Endothelial cell of umbilical vein (primary cell): ENCODE measurements at regions of chr5 and their contacts with region 1.

Region 1: GRCh38 chr5:157471709-157472108 is 11.7 kb downstream of the NIPAL4 start:
- DNase-seq: peak; percentile 27
- H3K4me3 ChIP-seq: no peak overlapping the region
- H3K27ac ChIP-seq: no peak overlapping the region
- H3K4me1 ChIP-seq: peaks cover 6% of the 10 kb centered on the region
- H3K27me3 ChIP-seq: no peaks in the 10 kb centered on the region
- CTCF ChIP-seq: peak; percentile 48 to 57
- POLR2A ChIP-seq: no peak

Region 2: GRCh38 chr5:156444753-156445291 is 1026.9 kb before region 1 on chr5:
- CTCF ChIA-PET with region 1: no interaction called
- POLR2A ChIA-PET with region 1: no interaction called
- dilution Hi-C with region 1: no loop called
- intact Hi-C with region 1: no loop called
- DNase-seq: no peak
- H3K4me3 ChIP-seq: no peak overlapping the region
- H3K27ac ChIP-seq: no peak overlapping the region
- H3K4me1 ChIP-seq: no peaks in the 10 kb centered on the region
- H3K27me3 ChIP-seq: no peaks in the 10 kb centered on the region
- CTCF ChIP-seq: no peak
- POLR2A ChIP-seq: no peak

Region 3: GRCh38 chr5:156865427-156865826 is 606.3 kb before region 1 on chr5:
- CTCF ChIA-PET with region 1: no interaction called
- POLR2A ChIA-PET with region 1: no interaction called
- dilution Hi-C with region 1: no loop called
- intact Hi-C with region 1: no loop called
- DNase-seq: no peak
- H3K4me3 ChIP-seq: no peak overlapping the region
- H3K27ac ChIP-seq: no peak overlapping the region
- H3K4me1 ChIP-seq: no peaks in the 10 kb centered on the region
- H3K27me3 ChIP-seq: no peaks in the 10 kb centered on the region
- CTCF ChIP-seq: no peak
- POLR2A ChIP-seq: no peak

Region 4: DNA sequence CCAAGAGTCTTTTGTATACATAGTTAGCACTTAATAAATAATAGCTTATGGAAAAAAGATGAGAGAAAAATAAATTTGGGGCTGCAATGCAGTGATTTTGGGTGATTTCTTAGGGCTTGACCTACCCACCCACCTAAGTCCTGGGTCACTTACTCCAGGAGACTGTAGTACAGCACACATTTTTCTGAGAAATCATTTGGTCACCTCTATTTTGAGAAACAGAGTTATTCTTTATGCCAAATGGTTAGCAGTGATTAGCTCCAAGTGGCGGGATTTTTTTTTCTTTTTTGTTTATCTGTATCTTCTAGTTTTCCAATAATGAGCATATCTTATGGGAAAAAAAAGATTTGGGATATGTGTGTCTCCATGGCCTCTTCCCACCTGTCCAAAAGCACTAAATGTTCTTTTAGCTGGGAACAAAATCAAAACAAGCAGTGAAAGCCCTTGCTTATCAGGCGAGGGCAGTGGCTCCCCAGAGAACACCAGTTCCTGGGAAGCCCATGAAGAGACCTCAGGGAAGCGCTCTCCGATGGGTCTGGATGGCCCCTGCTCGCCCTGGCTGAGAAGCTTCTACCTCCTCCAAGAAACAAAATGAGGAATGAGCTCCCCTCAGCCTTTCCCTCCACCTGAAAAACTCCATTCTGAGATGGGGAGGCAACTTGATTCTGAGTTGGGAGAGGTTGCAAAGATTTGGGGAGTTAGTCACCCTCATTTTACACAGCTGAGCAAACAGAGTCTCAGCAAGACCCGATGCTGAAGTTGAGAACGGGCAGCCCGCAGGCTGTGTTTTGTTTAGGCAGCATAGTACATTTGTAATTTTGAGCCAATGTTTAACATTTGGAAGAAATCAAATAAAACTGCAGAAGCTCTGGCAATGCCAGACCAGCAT is 135.9 kb before region 1 on chr5:
- CTCF ChIA-PET with region 1: interaction called, 52 read pairs
- POLR2A ChIA-PET with region 1: no interaction called
- dilution Hi-C with region 1: loop called (anchors 25 kb)
- intact Hi-C with region 1: no loop called
- DNase-seq: no peak
- H3K4me3 ChIP-seq: no peak overlapping the region
- H3K27ac ChIP-seq: no peak overlapping the region
- H3K4me1 ChIP-seq: no peaks in the 10 kb centered on the region
- H3K27me3 ChIP-seq: peaks cover 0 to 2% of the 10 kb centered on the region in 2 experiments
- CTCF ChIP-seq: no peak
- POLR2A ChIP-seq: no peak

Region 5: DNA sequence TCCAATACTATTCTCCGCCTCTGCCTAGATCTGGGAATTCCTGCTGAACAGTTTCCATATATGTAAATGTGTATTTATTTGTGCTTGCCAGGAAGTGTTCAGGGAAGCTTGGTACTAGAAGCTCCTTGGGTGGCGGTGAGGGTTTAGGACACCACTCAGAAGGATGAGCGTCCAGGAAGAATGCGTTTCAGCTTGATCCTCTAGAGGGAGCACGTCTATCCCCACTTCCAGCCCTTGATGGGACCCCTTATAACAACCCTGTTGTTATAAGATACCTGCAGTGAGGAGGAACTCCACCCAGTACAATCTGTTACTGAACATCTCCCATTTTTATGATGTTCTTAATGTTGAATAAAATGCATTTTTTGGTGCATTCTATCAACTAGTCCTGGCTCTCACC is 116.9 kb before region 1 on chr5:
- CTCF ChIA-PET with region 1: interaction called, 17 read pairs
- POLR2A ChIA-PET with region 1: no interaction called
- dilution Hi-C with region 1: loop called (anchors 25 kb)
- intact Hi-C with region 1: no loop called
- DNase-seq: no peak
- H3K4me3 ChIP-seq: no peak overlapping the region
- H3K27ac ChIP-seq: no peak overlapping the region
- H3K4me1 ChIP-seq: peaks cover 13% of the 10 kb centered on the region
- H3K27me3 ChIP-seq: no peaks in the 10 kb centered on the region
- CTCF ChIP-seq: peak; percentile 17 to 31
- POLR2A ChIP-seq: no peak

Region 6: DNA sequence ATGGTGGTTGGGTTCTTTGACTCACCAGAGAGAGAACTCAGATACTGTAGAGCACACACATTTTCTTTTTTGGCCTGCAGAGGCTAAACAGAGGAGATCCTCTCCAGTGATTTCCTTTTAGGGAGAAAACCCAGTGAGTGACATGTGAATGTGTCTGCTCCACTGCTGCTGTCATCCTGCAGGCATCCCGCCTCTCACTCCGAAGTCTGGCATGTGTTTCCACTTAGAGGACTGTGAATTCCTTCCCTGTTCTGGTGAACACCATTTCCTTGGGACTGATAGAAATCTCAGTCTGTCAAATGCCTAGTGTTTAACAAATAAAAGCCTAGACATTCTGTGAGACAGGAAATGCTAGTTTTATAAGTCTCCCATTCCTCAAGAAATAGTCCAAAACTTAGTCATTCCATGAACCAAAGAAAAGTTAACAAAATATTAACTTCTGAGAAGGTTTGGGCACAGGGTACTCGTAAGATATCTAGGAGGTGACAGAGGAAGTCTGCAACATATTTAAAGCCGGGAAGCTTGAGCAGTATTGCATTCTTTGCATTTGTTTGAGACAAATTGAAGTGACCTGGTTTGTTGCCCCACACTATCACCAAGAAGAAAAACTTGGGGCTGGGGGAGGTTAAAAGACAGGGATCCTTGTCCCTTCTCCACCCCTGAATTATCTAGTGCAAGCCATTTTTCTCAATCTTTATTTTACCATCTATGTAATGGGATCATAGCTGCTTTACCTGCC is 86.6 kb before region 1 on chr5:
- CTCF ChIA-PET with region 1: interaction called, 13 read pairs
- POLR2A ChIA-PET with region 1: no interaction called
- dilution Hi-C with region 1: no loop called
- intact Hi-C with region 1: no loop called
- DNase-seq: peak; percentile 91
- H3K4me3 ChIP-seq: no peak overlapping the region
- H3K27ac ChIP-seq: peak overlapping the region; percentile 88
- H3K4me1 ChIP-seq: peaks cover 57% of the 10 kb centered on the region
- H3K27me3 ChIP-seq: no peaks in the 10 kb centered on the region
- CTCF ChIP-seq: no peak
- POLR2A ChIP-seq: no peak

Region 7: DNA sequence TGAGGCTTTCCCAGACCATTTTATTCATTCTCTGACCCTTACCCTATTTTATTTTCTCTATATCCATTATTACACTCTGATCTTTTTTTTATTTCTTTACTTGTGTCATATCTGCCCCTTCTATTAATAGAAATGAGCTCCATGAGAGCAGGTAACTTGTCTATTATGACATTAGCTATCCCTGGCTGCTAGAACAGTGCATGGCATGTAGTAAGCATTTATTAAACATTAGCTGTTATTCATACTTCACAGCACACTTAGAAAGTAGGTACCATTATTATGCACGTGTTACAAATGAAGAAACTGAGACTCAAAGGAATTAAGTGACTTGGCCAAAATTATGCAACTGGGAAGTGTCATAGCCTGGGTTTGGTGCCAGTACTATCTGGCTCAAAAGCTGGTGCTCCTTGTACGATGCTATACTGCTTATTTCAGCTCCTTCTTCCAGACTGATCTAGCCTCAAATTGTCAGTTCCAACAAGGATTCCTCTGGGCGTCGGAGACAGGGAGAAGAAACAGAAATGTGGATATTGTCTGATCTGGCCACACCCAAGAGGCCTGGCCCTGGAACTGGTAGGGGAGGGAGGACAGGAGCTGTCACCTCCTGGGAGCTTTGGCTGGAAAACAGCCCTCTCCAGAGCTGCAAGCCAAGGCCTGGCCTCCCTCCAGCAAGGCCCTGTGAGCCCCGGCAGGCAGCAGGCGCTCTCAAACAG is 22.5 kb before region 1 on chr5:
- CTCF ChIA-PET with region 1: interaction called, 10 read pairs
- POLR2A ChIA-PET with region 1: no interaction called
- dilution Hi-C with region 1: no loop called
- intact Hi-C with region 1: no loop called
- DNase-seq: no peak
- H3K4me3 ChIP-seq: no peak overlapping the region
- H3K27ac ChIP-seq: no peak overlapping the region
- H3K4me1 ChIP-seq: no peaks in the 10 kb centered on the region
- H3K27me3 ChIP-seq: no peaks in the 10 kb centered on the region
- CTCF ChIP-seq: no peak
- POLR2A ChIP-seq: no peak

Region 8: GRCh38 chr5:157486221-157486681 is 14.5 kb after region 1 on chr5:
- CTCF ChIA-PET with region 1: interaction called, 28 read pairs
- POLR2A ChIA-PET with region 1: no interaction called
- dilution Hi-C with region 1: no loop called
- intact Hi-C with region 1: no loop called
- DNase-seq: no peak
- H3K4me3 ChIP-seq: no peak overlapping the region
- H3K27ac ChIP-seq: no peak overlapping the region
- H3K4me1 ChIP-seq: no peaks in the 10 kb centered on the region
- H3K27me3 ChIP-seq: no peaks in the 10 kb centered on the region
- CTCF ChIP-seq: no peak
- POLR2A ChIP-seq: no peak